Posterior vena cava (tissue), 2 donors: ENCODE measurements at regions of chr5 and their contacts with region 1.

Region 1: DNA sequence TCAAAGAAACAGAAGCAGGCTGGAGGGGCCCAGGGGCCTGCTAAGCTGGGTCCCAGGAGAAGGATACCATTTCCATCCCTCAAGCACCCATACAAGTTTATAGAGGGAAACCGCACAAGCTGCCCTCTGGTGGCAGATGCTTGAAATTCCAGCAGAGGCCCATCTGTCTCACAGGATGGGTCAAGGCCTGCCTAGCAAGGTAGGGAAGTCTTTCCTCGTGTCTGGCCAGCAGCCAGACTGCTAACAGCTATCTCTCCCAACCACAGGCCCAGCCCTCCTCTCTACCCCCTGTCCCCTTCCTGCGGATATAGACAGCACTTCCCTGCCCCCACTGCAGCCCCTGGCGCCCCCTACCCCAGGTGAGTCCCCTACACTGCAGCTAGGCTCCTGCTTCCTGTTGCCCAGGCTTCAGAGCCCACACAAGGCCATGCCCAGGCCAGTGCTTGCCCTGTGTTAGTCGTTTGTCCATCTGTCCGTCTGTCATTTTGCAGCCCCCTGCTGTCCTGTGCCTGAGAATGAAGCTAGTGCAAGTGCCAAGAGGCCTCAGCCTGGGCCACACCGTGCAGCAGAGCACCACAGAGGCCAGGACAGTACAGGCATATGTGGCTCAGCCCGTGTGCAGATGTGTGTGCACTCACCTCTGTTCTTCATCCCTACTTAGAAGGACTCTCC is 26.2 kb downstream of the TCF7 start:
- DNase-seq: peak; percentile 85

Region 2: GRCh38 chr5:134041570-134042411 is 98.9 kb before region 1 on chr5:
- intact Hi-C with region 1: loop called (anchors 2 to 5 kb)
- DNase-seq: peak; percentile 75